Left ventricle myocardium superior (tissue), 1 donor: ENCODE measurements at regions of chr10 and their contacts with region 1.

Region 1: DNA sequence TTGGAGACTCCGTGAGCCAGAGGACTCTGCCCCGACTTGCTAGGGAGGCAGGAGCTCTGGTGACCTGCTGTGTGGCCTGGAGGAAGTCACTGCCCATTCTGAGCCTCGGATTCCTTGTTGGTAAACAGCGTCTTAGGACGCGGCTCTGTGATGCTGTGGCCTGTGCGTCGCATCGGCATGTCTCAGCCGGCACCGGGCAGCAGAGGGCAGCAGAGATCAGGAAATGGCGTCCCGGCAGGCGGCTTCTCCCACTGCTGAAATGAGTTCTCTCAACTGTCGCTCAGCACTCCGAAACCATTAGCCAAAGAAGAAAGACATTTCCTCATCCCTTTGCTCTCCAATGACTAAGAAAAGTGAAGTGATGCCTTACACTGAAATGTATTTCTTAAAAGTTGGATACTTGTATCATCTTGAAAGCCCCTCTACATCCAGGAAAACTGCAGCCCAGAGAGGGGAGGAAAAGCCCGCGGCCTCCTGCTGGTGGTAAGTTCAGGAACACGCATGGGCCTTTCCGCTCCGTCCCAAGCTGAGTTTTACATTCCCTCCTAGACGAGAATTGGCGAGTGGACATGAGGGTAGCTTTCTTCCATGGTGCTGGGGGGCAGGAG is 91.7 kb downstream of the WDR11 start:
- DNase-seq: peak; percentile 85
- ATAC-seq: peak; percentile 95

Region 2: DNA sequence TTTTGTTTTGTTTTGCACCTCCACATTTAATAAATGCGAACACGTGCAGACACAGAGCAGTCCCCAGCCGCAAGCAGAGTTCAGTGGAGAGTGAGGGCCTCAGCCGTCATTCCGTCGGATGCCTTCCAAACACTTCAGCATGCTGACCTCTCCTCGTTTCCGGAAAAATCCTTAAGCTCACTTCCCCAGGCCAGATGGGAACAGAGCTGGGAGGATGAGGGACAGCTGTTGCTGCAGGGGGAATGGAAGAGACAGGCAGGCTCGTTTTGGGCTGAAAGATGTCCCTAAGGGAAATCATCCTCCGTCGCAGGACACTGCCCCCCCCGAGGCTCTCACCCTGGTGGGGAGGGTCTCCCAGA is 672.5 kb after region 1 on chr10:
- intact Hi-C with region 1: loop called (anchors 10 kb)
- DNase-seq: no peak
- ATAC-seq: peak; percentile 84

Region 3: GRCh38 chr10:121734589-121735045 is 791.7 kb after region 1 on chr10:
- intact Hi-C with region 1: loop called (anchors 10 kb)
- DNase-seq: no peak
- ATAC-seq: no peak